Breast epithelium (tissue), 4 donors: ENCODE measurements at regions of chr7 and their contacts with region 1.

Region 1: GRCh38 chr7:30688718-30689221 is 6.5 kb upstream of the CRHR2 start:
- DNase-seq: no peak
- H3K4me3 ChIP-seq: no peak overlapping the region
- H3K27ac ChIP-seq: no peak overlapping the region
- H3K4me1 ChIP-seq: no peaks in the 10 kb centered on the region
- H3K27me3 ChIP-seq: peaks cover 0 to 15% of the 10 kb centered on the region in 2 donors
- CTCF ChIP-seq: no peak
- POLR2A ChIP-seq: no peak

Region 2: DNA sequence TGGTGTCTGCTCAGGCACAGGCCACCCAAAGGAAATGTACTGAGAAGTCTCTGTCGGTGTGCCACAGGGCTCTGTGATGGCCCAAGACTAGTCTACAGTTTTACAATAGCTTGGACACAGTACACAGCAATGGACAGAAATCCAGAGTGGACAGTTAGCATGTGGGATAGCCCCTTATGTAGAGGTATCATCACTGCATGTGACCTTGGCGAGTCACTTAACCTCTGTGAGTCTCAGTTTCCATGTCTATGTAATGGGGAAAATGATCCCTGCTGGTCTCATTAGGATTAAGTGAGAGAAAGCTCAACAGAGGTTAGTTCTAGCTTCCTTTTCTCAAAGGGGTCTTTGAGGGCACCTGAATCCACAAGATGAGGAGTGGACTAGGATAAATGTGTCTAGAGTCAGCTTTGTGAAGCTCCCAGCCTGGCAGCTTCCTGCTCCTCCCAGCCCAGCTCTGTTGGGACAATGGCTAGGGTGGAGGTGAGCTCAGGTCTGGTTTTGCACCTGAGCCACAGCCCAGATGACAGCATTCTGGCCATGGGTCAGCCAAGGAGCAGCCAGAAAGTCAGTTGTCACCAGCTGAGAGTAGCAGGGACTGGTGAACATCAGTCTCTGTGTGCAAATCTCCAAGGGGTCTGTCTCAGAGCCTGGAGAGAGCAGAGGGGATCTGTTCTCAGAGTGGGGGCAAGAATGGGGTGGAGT is 24.4 kb before region 1 on chr7:
- intact Hi-C with region 1: loop called (anchors 1 kb)
- DNase-seq: no peak
- H3K4me3 ChIP-seq: no peak overlapping the region
- H3K27ac ChIP-seq: no peak overlapping the region
- H3K4me1 ChIP-seq: no peaks in the 10 kb centered on the region
- H3K27me3 ChIP-seq: no peaks in the 10 kb centered on the region
- CTCF ChIP-seq: no peak
- POLR2A ChIP-seq: no peak

Region 3: DNA sequence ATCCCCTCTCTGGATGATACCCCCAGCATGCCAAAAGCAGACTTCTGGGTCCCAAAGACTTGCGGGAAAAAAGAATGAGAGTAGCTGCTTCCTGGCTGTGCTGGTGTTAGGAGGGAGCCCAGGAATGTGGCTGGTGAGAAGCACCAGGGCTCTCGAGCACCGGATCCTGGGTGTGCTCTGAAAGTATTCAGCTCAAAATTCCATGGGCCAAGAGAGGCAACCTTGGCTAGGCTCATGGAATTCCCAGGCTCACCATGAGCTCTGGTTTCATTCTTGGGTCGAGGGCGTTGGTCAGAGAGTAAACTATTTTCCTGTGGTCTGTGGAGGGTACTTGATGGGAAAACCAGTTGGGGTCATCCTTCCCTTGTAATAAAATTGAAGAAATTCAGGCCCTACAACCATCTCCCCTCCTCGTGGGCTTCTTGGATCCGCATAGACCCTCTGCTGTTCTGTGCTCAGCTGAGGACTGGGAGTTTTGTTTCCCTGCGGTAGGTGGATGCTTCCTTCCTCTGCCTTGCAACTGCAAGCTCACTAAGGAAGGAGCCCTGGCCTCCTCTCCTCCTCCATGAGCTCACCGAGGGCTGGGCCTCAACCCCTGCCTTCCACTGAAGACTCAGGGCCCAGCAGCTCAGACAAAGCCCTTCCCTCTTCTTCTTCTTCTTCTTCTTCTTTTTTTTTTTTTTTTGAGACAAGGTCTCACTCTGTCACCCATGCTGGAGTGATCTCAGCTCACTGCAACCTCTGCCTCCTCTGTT is 188.4 kb after region 1 on chr7:
- intact Hi-C with region 1: no loop called
- DNase-seq: no peak
- H3K4me3 ChIP-seq: no peak overlapping the region
- H3K27ac ChIP-seq: no peak overlapping the region
- H3K4me1 ChIP-seq: no peaks in the 10 kb centered on the region
- H3K27me3 ChIP-seq: no peaks in the 10 kb centered on the region
- CTCF ChIP-seq: no peak
- POLR2A ChIP-seq: no peak

Region 4: GRCh38 chr7:31151849-31152248 is 463.1 kb after region 1 on chr7:
- intact Hi-C with region 1: no loop called
- DNase-seq: no peak
- H3K4me3 ChIP-seq: no peak overlapping the region
- H3K27ac ChIP-seq: no peak overlapping the region
- H3K4me1 ChIP-seq: no peaks in the 10 kb centered on the region
- H3K27me3 ChIP-seq: no peaks in the 10 kb centered on the region
- CTCF ChIP-seq: no peak
- POLR2A ChIP-seq: no peak